ENCODE measurements at regions of chr11 and their contacts with region 1.

Region 1: GRCh38 chr11:86740709-86741483 is 59.4 kb upstream of the PRSS23 start:
- DNase-seq: peak; percentile 94
- H3K4me3 Mint-ChIP-seq: peak overlapping the region; percentile 49
- H3K27ac Mint-ChIP-seq: peak overlapping the region; percentile 96
- H3K4me1 Mint-ChIP-seq: peaks cover 72% of the 10 kb centered on the region
- H3K27me3 Mint-ChIP-seq: no peaks in the 10 kb centered on the region
- CTCF ChIP-seq: no peak

Region 2: GRCh38 chr11:86632499-86633269 is 108.2 kb before region 1 on chr11:
- CTCF ChIA-PET with region 1: interaction called, 3 read pairs
- POLR2A ChIA-PET with region 1: no interaction called
- intact Hi-C with region 1: loop called (anchors 1 kb)
- DNase-seq: peak; percentile 79
- H3K4me3 Mint-ChIP-seq: no peak overlapping the region
- H3K27ac Mint-ChIP-seq: peak overlapping the region; percentile 27
- H3K4me1 Mint-ChIP-seq: peaks cover 5% of the 10 kb centered on the region
- H3K27me3 Mint-ChIP-seq: no peaks in the 10 kb centered on the region
- CTCF ChIP-seq: no peak

Region 3: GRCh38 chr11:86696004-86696403 is 44.9 kb before region 1 on chr11:
- CTCF ChIA-PET with region 1: interaction called, 5 read pairs
- POLR2A ChIA-PET with region 1: interaction called, 17 read pairs
- intact Hi-C with region 1: loop called (anchors 2 kb)
- DNase-seq: peak; percentile 85
- H3K4me3 Mint-ChIP-seq: peak overlapping the region; percentile 10
- H3K27ac Mint-ChIP-seq: peak overlapping the region; percentile 43
- H3K4me1 Mint-ChIP-seq: peaks cover 35% of the 10 kb centered on the region
- H3K27me3 Mint-ChIP-seq: no peaks in the 10 kb centered on the region
- CTCF ChIP-seq: no peak

Region 4: GRCh38 chr11:86719781-86720463 is 21.0 kb before region 1 on chr11:
- CTCF ChIA-PET with region 1: interaction called, 5 read pairs
- POLR2A ChIA-PET with region 1: interaction called, 16 read pairs
- intact Hi-C with region 1: no loop called
- DNase-seq: peak; percentile 84
- H3K4me3 Mint-ChIP-seq: peak overlapping the region; percentile 26
- H3K27ac Mint-ChIP-seq: peak overlapping the region; percentile 76
- H3K4me1 Mint-ChIP-seq: peaks cover 35% of the 10 kb centered on the region
- H3K27me3 Mint-ChIP-seq: no peaks in the 10 kb centered on the region
- CTCF ChIP-seq: no peak

Region 5: DNA sequence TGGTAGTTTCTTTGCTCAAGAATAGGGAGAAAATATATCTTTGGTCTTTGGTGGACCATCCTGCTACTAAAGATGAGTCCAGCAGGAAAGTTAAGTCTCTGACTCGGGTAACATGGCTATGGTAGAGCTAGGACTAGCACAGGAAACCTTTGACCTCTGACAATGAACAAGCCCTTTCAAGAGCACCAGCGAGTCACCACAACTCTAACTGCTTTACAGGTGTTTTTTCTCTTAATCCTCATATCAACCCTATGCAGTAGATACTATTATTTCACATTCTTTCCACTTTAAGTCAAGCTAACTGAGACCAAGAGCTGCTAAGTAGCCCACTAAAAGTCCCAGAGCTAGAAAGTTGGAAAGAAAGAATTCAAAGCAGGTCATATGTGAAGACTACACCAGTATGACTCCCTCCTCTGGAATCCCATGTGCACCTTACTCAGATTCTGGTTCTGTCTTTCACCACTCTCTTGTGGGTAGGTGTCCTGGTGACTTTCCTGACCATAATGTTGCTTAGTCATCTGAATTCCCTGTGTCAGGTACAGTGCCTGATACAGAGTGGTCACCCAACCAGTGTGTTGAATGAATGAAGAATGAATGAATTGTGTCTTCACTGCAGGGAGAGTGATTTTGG is 14.7 kb before region 1 on chr11:
- CTCF ChIA-PET with region 1: interaction called, 5 read pairs
- POLR2A ChIA-PET with region 1: interaction called, 16 read pairs
- intact Hi-C with region 1: no loop called
- DNase-seq: peak; percentile 34
- H3K4me3 Mint-ChIP-seq: no peak overlapping the region
- H3K27ac Mint-ChIP-seq: no peak overlapping the region
- H3K4me1 Mint-ChIP-seq: peaks cover 15% of the 10 kb centered on the region
- H3K27me3 Mint-ChIP-seq: no peaks in the 10 kb centered on the region
- CTCF ChIP-seq: no peak

Region 6: DNA sequence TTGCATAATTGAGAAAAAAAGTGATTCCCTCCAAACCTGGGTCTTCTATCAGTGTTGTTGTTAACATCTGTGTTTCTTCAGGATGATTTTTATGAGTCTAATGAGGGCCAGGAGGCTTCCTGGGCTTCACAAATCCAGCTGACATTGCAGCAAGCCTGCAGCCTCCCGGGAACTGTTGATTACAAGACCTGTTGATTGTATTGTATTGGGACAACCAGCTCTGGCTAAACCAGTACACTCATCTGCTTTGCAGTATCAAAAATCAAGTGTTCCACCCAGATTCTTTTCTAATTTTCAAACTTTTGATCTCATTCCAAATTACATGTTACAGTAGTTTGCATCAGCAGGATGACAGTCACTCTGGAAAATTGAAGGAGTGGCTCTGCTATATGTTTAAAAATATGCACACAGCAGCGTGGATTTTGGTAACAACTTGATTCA is 43.4 kb after region 1 on chr11:
- CTCF ChIA-PET with region 1: interaction called, 4 read pairs
- POLR2A ChIA-PET with region 1: interaction called, 3 read pairs
- intact Hi-C with region 1: loop called (anchors 1 kb)
- DNase-seq: no peak
- H3K4me3 Mint-ChIP-seq: no peak overlapping the region
- H3K27ac Mint-ChIP-seq: peak overlapping the region; percentile 74
- H3K4me1 Mint-ChIP-seq: peaks cover 22% of the 10 kb centered on the region
- H3K27me3 Mint-ChIP-seq: no peaks in the 10 kb centered on the region
- CTCF ChIP-seq: no peak

Region 7: DNA sequence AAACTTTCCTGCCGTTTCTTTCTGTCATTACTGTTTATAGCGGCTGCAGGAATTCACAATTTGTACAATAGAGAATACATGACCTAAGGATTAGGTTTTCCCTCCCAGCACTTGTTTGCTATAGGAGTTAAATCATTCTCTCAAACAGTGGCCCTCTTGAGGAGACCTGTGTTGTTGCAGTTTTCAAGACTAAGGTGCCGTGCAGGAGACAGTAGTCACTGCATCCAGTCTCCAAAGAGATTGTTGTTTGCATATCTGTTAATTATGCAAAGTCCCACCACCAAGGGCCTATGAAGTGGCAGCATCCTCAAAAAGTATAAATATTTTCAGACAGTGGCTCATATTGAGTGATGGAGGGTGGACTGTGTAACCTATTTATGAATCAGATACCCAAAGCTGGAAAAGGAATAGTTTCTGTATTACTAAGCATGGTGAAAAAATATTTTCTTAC is 61.7 kb after region 1 on chr11:
- CTCF ChIA-PET with region 1: no interaction called
- POLR2A ChIA-PET with region 1: interaction called, 3 read pairs
- intact Hi-C with region 1: loop called (anchors 1 kb)
- DNase-seq: peak; percentile 61
- H3K4me3 Mint-ChIP-seq: no peak overlapping the region
- H3K27ac Mint-ChIP-seq: no peak overlapping the region
- H3K4me1 Mint-ChIP-seq: peaks cover 11% of the 10 kb centered on the region
- H3K27me3 Mint-ChIP-seq: no peaks in the 10 kb centered on the region
- CTCF ChIP-seq: peak; percentile 69